Posterior vena cava (tissue), 2 donors: ENCODE measurements at regions of chr7 and their contacts with region 1.

Region 1: GRCh38 chr7:22255834-22256233 is 101.1 kb downstream of the RAPGEF5 start:
- DNase-seq: no peak

Region 2: GRCh38 chr7:22110227-22110839 is 145.5 kb before region 1 on chr7:
- intact Hi-C with region 1: loop called in 1 of 2 experiments (anchors 10 kb)
- DNase-seq: no peak

Region 3: DNA sequence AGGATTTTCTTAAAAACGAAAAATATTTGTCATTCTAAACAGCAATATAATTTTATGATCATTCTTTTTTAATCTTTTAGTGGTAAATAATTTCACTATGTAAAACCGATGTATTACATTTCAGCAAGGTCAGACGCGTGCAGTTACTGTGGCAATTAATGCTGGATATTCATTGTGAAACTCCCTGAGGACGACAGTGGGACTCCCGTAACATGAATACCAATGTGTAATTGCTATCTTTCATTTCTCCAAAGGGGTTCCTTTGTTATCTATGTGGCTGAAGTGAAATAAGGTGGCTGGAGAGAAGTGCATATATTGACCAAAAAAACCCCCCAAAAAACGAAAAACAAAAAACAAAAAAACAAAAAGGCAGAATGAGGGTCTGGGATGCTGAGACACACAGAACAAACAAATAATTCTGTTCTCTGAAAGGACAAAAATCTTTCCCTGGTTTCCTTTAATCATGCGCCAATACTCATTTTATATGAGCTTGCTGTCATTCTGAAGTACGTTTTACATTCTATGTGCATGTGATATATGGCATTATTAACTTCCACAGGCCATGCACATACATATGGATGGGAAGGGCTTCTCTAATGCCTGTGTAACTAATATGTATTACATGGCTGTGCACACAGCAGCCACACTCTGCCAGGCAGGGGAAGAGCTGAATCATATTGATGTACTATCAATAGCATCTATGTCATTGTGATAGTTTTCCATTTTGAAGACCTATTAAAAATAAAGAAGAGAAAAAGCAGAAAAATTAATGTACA is 60.2 kb before region 1 on chr7:
- intact Hi-C with region 1: loop called in 1 of 2 experiments (anchors 2 kb)
- DNase-seq: no peak

Region 4: DNA sequence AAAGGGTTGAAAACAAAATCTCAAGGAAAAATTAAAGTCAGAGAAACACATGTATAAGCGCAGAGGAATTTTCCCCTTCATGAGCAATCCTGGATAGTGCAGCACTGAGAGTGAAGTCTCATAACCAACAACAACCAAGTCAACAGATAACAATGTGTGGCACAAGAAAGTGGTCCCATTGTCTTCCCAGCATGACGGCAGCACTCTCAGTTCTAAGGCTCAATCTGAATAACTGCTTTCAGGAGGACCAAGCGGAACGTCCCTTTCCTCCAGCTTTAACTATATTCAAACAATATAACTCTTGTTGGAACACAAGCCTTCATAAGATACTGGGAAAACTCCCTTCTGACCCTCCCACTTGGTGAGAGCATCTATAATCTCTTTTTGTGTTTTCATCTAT is 36.8 kb before region 1 on chr7:
- intact Hi-C with region 1: no loop called
- DNase-seq: no peak